ENCODE measurements at regions of chrX and their contacts with region 1.

Region 1: GRCh38 chrX:103464774-103465117 is 54.5 kb downstream of the RAB40A start:
- DNase-seq: peak; percentile 55
- H3K4me3 ChIP-seq: peak overlapping the region; percentile 58
- H3K27ac ChIP-seq: no peak overlapping the region
- H3K4me1 ChIP-seq: no peaks in the 10 kb centered on the region
- CTCF ChIP-seq: peak; percentile 72

Region 2: GRCh38 chrX:103214870-103215424 is 249.8 kb before region 1 on chrX and contains the start of gene BEX4:
- CTCF ChIA-PET with region 1: no interaction called
- POLR2A ChIA-PET with region 1: no interaction called
- intact Hi-C with region 1: loop called (anchors 2 kb)
- DNase-seq: no peak
- H3K4me3 ChIP-seq: no peak within 1 kb of the TSS
- H3K27ac ChIP-seq: no peak within 1 kb of the TSS
- H3K4me1 ChIP-seq: no peaks in the 10 kb centered on the region
- CTCF ChIP-seq: no peak
- total RNA-seq, gene BEX4: not detected in 2 replicates

Region 3: DNA sequence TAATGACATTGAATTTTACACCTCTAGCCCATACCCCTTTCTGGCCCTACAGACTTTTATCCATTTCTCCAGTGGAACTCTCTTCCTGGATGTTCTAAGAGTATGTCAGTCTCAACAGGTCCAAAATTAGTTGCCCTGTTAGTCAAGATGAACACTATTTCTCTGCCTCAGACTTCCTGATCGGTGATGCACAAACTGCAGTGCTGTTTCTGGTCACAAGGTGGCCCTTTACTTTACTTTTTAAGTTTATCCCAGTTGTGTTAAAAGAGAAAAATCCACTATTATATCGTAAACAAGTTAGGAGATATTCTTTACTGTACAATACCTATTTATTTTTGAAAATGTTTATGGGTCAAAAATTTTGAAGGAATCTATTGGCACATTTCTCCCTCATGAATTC is 121.6 kb before region 1 on chrX:
- CTCF ChIA-PET with region 1: no interaction called
- POLR2A ChIA-PET with region 1: no interaction called
- intact Hi-C with region 1: loop called (anchors 1 kb)
- DNase-seq: peak; percentile 33
- H3K4me3 ChIP-seq: no peak overlapping the region
- H3K27ac ChIP-seq: no peak overlapping the region
- H3K4me1 ChIP-seq: no peaks in the 10 kb centered on the region
- CTCF ChIP-seq: peak; percentile 74

Region 4: DNA sequence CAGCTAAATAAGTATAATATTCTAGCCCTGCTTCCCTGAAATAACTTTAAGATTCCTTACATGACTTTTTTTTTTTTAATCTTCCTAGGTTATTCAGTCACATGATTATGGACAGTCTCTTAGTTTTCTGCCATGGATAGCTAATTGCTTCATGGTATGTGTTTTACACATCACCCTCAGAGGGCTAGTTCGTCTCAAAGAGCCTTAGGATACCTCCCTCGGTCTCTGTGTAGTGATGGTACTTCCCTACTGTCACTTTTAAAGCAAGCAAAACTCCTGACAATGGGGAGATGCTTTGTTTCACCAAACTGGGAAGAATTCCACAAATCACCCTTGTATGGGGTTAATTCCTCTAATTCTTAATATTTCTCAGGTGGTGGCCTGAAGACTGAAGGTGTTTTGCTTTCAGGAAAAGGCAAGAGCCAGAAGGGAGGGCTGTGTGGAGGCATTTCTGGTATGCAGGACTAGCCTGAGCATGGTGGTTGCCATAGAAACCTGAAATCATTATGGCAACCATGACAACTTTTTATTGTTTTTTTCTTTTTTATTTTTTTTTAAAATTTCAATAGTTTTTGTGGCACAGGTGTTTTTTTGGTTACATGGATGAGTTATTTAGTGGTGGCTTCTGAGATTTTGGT is 18.0 kb before region 1 on chrX:
- CTCF ChIA-PET with region 1: no interaction called
- POLR2A ChIA-PET with region 1: no interaction called
- intact Hi-C with region 1: no loop called
- DNase-seq: no peak
- H3K4me3 ChIP-seq: no peak overlapping the region
- H3K27ac ChIP-seq: no peak overlapping the region
- H3K4me1 ChIP-seq: no peaks in the 10 kb centered on the region
- CTCF ChIP-seq: no peak

Measured in OCI-LY7 (cell line).